Endothelial cell of umbilical vein (primary cell): ENCODE measurements at regions of chr12 and their contacts with region 1.

Region 1: GRCh38 chr12:20549107-20549719 is 145.9 kb upstream of the SLCO1C1 start:
- DNase-seq: peak; percentile 80
- H3K4me3 ChIP-seq: no peak overlapping the region
- H3K27ac ChIP-seq: no peak overlapping the region
- H3K4me1 ChIP-seq: peaks cover 9% of the 10 kb centered on the region
- H3K27me3 ChIP-seq: no peaks in the 10 kb centered on the region
- CTCF ChIP-seq: peak; percentile 47 to 58
- POLR2A ChIP-seq: no peak

Region 2: GRCh38 chr12:20383612-20384011 is 165.6 kb before region 1 on chr12:
- CTCF ChIA-PET with region 1: interaction called, 7 read pairs
- POLR2A ChIA-PET with region 1: no interaction called
- dilution Hi-C with region 1: no loop called
- intact Hi-C with region 1: loop called (anchors 10 kb)
- DNase-seq: no peak
- H3K4me3 ChIP-seq: no peak overlapping the region
- H3K27ac ChIP-seq: no peak overlapping the region
- H3K4me1 ChIP-seq: no peaks in the 10 kb centered on the region
- H3K27me3 ChIP-seq: no peaks in the 10 kb centered on the region
- CTCF ChIP-seq: no peak
- POLR2A ChIP-seq: no peak

Region 3: GRCh38 chr12:20463913-20464524 is 85.2 kb before region 1 on chr12:
- CTCF ChIA-PET with region 1: interaction called, 11 read pairs
- POLR2A ChIA-PET with region 1: no interaction called
- dilution Hi-C with region 1: no loop called
- intact Hi-C with region 1: loop called (anchors 1 kb)
- DNase-seq: peak; percentile 44
- H3K4me3 ChIP-seq: no peak overlapping the region
- H3K27ac ChIP-seq: no peak overlapping the region
- H3K4me1 ChIP-seq: no peaks in the 10 kb centered on the region
- H3K27me3 ChIP-seq: no peaks in the 10 kb centered on the region
- CTCF ChIP-seq: peak; percentile 26 to 41
- POLR2A ChIP-seq: no peak

Region 4: GRCh38 chr12:20561871-20562270 is 12.7 kb after region 1 on chr12:
- CTCF ChIA-PET with region 1: interaction called, 70 read pairs
- POLR2A ChIA-PET with region 1: no interaction called
- dilution Hi-C with region 1: no loop called
- intact Hi-C with region 1: no loop called
- DNase-seq: no peak
- H3K4me3 ChIP-seq: no peak overlapping the region
- H3K27ac ChIP-seq: no peak overlapping the region
- H3K4me1 ChIP-seq: no peaks in the 10 kb centered on the region
- H3K27me3 ChIP-seq: no peaks in the 10 kb centered on the region
- CTCF ChIP-seq: no peak
- POLR2A ChIP-seq: no peak

Region 5: GRCh38 chr12:20578142-20578541 is 28.9 kb after region 1 on chr12:
- CTCF ChIA-PET with region 1: no interaction called
- POLR2A ChIA-PET with region 1: no interaction called
- dilution Hi-C with region 1: no loop called
- intact Hi-C with region 1: no loop called
- DNase-seq: no peak
- H3K4me3 ChIP-seq: no peak overlapping the region
- H3K27ac ChIP-seq: no peak overlapping the region
- H3K4me1 ChIP-seq: no peaks in the 10 kb centered on the region
- H3K27me3 ChIP-seq: no peaks in the 10 kb centered on the region
- CTCF ChIP-seq: no peak
- POLR2A ChIP-seq: no peak

Region 6: GRCh38 chr12:20722142-20722541 is 172.9 kb after region 1 on chr12:
- CTCF ChIA-PET with region 1: no interaction called
- POLR2A ChIA-PET with region 1: no interaction called
- dilution Hi-C with region 1: no loop called
- intact Hi-C with region 1: no loop called
- DNase-seq: peak; percentile 20
- H3K4me3 ChIP-seq: no peak overlapping the region
- H3K27ac ChIP-seq: no peak overlapping the region
- H3K4me1 ChIP-seq: no peaks in the 10 kb centered on the region
- H3K27me3 ChIP-seq: no peaks in the 10 kb centered on the region
- CTCF ChIP-seq: no peak
- POLR2A ChIP-seq: no peak